Activated T-helper 2 cell treated with anti-CD3 and anti-CD28 coated beads, Interferon-gamma antibody, Interleukin-2, Interleukin-4, amounts not matched to agents 10 μg/mL and 5 μg/mL and 100 μg/mL, durations not matched to agents 14 hours and 24 hours and 36 hours (primary cell): ENCODE measurements at regions of chr6 and their contacts with region 1.

Region 1: DNA sequence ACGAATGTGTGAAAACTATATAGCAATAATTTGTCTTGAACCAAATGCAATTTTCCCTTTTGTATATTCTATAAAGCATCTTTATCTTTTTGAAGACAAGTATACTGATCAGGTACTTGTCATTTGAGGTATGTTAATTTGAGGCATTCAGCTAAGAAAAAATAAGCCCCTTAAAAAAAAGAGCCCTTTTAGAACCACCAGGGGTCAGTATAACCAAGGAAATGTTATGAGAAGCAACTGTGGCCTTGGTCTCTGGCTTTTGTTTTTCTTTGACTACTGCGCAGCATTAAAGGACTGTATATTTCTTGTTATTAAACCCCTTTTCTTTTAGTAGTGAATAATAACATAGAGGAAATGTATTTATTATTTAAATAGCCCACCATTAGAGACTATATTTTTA is 43.1 kb downstream of the CD109 start:
- DNase-seq: no peak
- H3K4me3 Mint-ChIP-seq: no peak overlapping the region
- H3K27ac Mint-ChIP-seq: no peak overlapping the region
- H3K4me1 Mint-ChIP-seq: peaks cover 5% of the 10 kb centered on the region
- H3K27me3 Mint-ChIP-seq: no peaks in the 10 kb centered on the region

Region 2: GRCh38 chr6:73854998-73855718 is 116.1 kb after region 1 on chr6:
- intact Hi-C with region 1: loop called (anchors 1 kb)
- DNase-seq: no peak
- H3K4me3 Mint-ChIP-seq: no peak overlapping the region
- H3K27ac Mint-ChIP-seq: no peak overlapping the region
- H3K4me1 Mint-ChIP-seq: no peaks in the 10 kb centered on the region
- H3K27me3 Mint-ChIP-seq: no peaks in the 10 kb centered on the region